Cardiac septum (tissue), 1 donor: ENCODE measurements at regions of chr2 and their contacts with region 1.

Region 1: GRCh38 chr2:71685078-71685848 is 231.9 kb downstream of the DYSF start:
- DNase-seq: no peak

Region 2: DNA sequence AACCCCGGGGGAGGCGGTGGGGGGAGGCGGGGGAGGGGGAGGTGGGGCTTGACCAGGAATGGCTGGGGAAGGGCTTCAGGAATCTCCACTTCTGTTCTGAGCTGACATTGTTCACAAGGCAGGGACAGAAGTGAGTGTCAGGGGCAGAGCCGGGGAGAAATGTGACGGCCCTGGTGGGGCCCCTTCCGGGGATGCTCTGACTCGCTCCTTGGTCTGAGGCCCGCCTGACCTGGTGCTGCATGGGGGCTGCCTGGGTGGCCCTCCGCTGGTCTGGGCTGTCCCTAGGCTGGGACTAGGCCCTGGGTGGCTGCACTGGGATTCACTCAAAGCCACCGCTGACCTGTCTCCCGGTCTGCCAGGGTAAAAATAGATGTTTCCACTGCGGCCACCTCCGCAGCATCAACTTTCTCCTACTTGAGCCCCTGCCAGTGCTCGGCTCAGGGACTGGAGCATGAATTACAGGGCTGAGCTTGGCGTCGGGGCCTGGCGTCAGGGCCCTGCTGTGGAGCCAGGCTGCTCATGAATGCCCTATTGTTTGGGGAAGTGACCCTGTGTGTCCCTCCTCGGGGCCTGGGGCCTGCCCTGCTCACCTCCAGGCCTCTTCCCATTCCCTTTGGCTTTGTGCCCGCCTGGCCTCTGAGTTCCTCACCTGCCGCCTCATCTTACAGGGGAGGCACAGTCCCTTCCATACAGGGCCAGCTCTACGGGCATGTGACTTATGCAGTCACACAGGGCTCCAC is 15.6 kb after region 1 on chr2:
- intact Hi-C with region 1: loop called (anchors 2 kb)
- DNase-seq: peak; percentile 90

Region 3: GRCh38 chr2:71807975-71808451 is 122.8 kb after region 1 on chr2:
- intact Hi-C with region 1: no loop called
- DNase-seq: peak; percentile 64